ENCODE measurements at regions of chr11 and their contacts with region 1.

Region 1: GRCh38 chr11:65888163-65888814 is at the start of gene FIBP:
- DNase-seq: peak; percentile 98
- H3K4me3 Mint-ChIP-seq: peak within 1 kb of the TSS; percentile 90
- H3K27ac Mint-ChIP-seq: peak within 1 kb of the TSS; percentile 93
- H3K4me1 Mint-ChIP-seq: peaks cover 70% of the 10 kb centered on the region
- H3K27me3 Mint-ChIP-seq: no peaks in the 10 kb centered on the region
- total RNA-seq, gene FIBP: 94.7 to 112 TPM

Region 2: GRCh38 chr11:65532388-65533064 is 355.8 kb before region 1 on chr11:
- CTCF ChIA-PET with region 1: no interaction called
- POLR2A ChIA-PET with region 1: no interaction called
- DNase-seq: no peak
- H3K4me3 Mint-ChIP-seq: no peak overlapping the region
- H3K27ac Mint-ChIP-seq: peak overlapping the region; percentile 5
- H3K4me1 Mint-ChIP-seq: peaks cover 24% of the 10 kb centered on the region
- H3K27me3 Mint-ChIP-seq: no peaks in the 10 kb centered on the region

Region 3: GRCh38 chr11:65577770-65578533 is 310.3 kb before region 1 on chr11:
- CTCF ChIA-PET with region 1: no interaction called
- POLR2A ChIA-PET with region 1: no interaction called
- DNase-seq: no peak
- H3K4me3 Mint-ChIP-seq: peak overlapping the region; percentile 57
- H3K27ac Mint-ChIP-seq: peak overlapping the region; percentile 33
- H3K4me1 Mint-ChIP-seq: peaks cover 33% of the 10 kb centered on the region
- H3K27me3 Mint-ChIP-seq: no peaks in the 10 kb centered on the region

Region 4: GRCh38 chr11:65711785-65712632 is 176.3 kb before region 1 on chr11 and contains the start of gene KAT5:
- CTCF ChIA-PET with region 1: interaction called, 20 read pairs
- POLR2A ChIA-PET with region 1: no interaction called
- DNase-seq: peak; percentile 99
- H3K4me3 Mint-ChIP-seq: peak within 1 kb of the TSS; percentile 82
- H3K27ac Mint-ChIP-seq: peak within 1 kb of the TSS; percentile 97
- H3K4me1 Mint-ChIP-seq: peaks cover 35% of the 10 kb centered on the region
- H3K27me3 Mint-ChIP-seq: no peaks in the 10 kb centered on the region
- total RNA-seq, gene KAT5: 60.8 to 72.3 TPM

Region 5: DNA sequence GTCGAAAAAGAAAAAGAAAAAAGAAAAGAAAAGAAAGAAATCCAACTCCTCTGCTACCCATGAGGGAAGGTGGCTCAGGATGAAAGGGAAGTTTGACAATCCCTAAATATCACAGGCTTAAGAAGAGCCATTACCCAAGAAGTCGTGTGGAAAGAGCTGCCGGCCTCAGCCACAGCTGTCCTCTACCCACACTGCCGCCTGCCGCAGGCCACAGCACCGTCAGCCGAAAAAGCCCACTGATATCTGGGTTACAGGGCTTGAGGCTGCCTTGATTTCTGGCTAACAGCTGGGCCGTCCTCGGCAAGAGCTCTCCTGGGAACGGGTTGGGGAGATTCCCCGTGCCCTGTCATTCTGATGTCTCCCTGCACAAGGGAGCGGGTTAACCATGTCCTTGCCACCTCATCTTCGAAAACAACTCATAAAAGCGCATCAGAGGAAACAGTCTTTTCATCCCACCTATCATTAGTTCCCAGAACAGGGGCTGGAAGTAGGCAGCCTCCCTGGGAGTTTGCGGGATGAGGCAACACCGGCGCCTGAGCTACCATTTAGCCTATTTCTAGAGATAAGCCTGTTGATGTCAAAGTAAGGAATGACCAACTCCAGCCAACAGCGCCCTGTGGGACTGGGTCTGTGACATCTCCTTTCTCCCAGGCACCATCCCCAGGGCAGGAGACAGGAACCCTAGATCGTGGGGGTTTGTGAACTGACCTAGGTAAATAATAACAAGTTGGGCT is 76.4 kb before region 1 on chr11:
- CTCF ChIA-PET with region 1: interaction called, 15 read pairs
- POLR2A ChIA-PET with region 1: no interaction called
- DNase-seq: no peak
- H3K4me3 Mint-ChIP-seq: no peak overlapping the region
- H3K27ac Mint-ChIP-seq: no peak overlapping the region
- H3K4me1 Mint-ChIP-seq: peaks cover 9% of the 10 kb centered on the region
- H3K27me3 Mint-ChIP-seq: peaks cover 6% of the 10 kb centered on the region

Region 6: DNA sequence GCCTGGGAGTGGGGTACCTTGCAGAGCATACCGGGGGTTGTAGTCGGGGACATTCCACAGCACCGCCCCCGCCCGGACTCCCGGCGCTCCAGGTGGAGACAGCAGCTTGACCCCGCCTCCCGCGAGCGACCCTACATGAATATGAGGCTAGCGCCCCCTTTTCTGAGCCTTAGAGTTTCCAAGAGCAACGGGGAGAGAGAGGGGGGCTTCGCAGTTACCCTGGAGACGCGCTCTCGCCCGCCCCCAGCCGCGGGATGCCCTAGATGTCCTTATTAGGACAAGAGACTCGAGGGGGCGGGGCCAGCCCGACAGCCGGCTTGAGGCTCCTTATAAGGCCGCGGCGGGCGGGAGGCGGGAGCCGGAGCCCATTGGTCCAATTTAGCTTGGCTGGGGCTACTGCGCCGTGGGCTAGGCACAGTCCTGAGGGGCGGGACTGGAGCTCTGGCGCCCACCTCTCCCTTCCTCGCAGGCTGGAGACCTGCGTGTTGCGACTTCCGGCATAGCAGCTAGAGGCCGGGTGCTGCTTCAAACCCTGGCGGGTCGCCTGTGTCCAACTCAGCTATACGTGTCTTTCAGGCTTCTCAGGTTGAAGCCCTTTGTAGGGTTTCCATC is 29.0 kb before region 1 on chr11:
- CTCF ChIA-PET with region 1: interaction called, 590 read pairs
- POLR2A ChIA-PET with region 1: interaction called, 9 read pairs
- DNase-seq: peak; percentile 99
- H3K4me3 Mint-ChIP-seq: peak overlapping the region; percentile 97
- H3K27ac Mint-ChIP-seq: peak overlapping the region; percentile 99
- H3K4me1 Mint-ChIP-seq: peaks cover 54% of the 10 kb centered on the region
- H3K27me3 Mint-ChIP-seq: no peaks in the 10 kb centered on the region

Region 7: DNA sequence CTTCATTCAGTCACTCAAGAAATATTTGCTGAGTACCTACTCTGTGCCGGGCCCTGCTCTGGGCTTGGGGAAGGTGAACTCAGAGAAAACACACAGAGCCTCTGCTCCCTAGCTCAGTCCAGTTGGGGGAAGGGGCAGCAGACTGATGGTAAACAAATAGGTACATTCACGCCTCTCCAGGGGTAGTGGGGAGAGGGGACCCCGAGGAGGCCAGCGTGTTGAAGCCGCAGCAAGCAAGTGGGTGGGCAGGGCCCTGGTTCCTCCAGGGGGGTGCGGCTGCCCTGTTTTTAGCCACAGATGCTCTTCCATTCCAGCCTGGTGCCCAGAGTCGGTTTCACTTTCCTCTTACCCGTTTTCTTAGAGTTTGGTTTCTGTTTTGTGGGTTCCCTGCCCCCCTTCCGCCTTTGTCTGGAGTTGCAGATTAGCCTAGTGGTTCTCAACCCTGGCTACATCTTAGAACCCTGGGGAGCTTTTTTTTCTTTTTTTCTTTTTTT is 39.7 kb after region 1 on chr11:
- CTCF ChIA-PET with region 1: interaction called, 64 read pairs
- POLR2A ChIA-PET with region 1: no interaction called
- DNase-seq: peak; percentile 93
- H3K4me3 Mint-ChIP-seq: peak overlapping the region; percentile 55
- H3K27ac Mint-ChIP-seq: peak overlapping the region; percentile 99
- H3K4me1 Mint-ChIP-seq: peaks cover 63% of the 10 kb centered on the region
- H3K27me3 Mint-ChIP-seq: no peaks in the 10 kb centered on the region

Region 8: DNA sequence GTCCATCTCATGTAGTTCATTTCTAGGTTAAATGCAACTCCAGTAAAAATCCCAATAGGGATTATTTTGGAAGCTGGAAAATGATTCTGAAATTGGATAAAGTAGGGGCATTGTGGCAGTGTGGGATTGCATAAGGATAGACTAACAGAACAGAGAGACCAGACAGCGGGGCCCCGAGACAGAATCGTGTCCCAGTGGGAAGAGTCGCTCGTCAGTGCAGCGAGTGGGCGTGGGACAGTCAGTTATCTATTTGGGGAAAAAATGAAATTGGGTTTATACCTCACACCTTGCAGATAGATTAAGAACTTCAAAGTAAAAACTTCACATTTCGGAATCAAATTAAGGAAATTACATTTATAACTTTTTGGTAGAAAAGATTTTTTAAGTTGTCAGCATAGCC is 83.8 kb after region 1 on chr11:
- CTCF ChIA-PET with region 1: interaction called, 11 read pairs
- POLR2A ChIA-PET with region 1: no interaction called
- DNase-seq: no peak
- H3K4me3 Mint-ChIP-seq: no peak overlapping the region
- H3K27ac Mint-ChIP-seq: no peak overlapping the region
- H3K4me1 Mint-ChIP-seq: peaks cover 8% of the 10 kb centered on the region
- H3K27me3 Mint-ChIP-seq: no peaks in the 10 kb centered on the region

Region 9: DNA sequence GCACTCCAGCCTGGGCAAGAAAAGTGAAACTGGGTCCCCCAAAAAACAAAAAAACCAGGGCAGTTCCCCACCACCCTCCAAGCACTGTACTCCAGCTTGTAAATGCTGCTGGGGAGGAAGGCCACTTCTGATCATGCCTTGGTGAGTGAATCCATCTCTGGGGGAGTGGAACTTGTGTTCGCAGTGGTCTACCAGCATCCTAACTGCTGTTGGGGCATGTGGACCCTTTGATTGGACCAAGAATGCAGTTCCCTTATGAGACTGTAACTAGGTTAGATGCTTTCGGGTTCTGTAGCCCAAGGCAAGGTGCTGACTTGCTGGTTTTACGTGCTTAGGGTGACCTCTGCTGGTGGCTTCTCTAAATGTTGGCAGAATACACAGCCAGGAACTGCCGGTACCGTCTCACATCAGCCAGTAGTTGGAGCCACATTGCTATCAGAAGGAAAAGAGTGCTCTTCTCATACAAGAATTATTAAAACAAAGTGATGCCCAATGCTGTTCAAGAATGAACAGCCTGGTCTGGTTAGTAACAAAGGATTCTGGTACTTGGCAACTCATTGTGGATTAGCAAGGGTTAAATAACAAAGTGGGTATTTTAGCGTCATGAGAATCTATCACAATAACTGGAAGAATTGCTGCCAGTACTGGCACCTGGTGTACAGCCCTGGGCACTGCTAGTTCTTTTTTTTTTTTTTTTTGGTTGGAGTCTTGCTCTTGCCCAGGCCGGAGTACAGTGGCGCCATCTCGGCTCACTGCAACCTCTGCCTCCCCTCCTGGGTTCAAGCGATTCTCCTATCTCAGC is 100.7 kb after region 1 on chr11:
- CTCF ChIA-PET with region 1: interaction called, 22 read pairs
- POLR2A ChIA-PET with region 1: no interaction called
- DNase-seq: peak; percentile 97
- H3K4me3 Mint-ChIP-seq: no peak overlapping the region
- H3K27ac Mint-ChIP-seq: peak overlapping the region; percentile 87
- H3K4me1 Mint-ChIP-seq: peaks cover 7% of the 10 kb centered on the region
- H3K27me3 Mint-ChIP-seq: no peaks in the 10 kb centered on the region